Heart left ventricle (tissue), 16 donors: ENCODE measurements at regions of chr10 and their contacts with region 1.

Region 1: GRCh38 chr10:114470956-114471905 is 66.9 kb upstream of the AFAP1L2 start:
- DNase-seq: peak; percentile 59 to 77 (median 63)
- ATAC-seq: peak; percentile 52 to 81 (median 74)
- H3K4me3 ChIP-seq: no peak overlapping the region
- H3K27ac ChIP-seq: peak overlapping the region in 8 of 12 donors; percentile 9 to 60 (median 28)
- H3K4me1 ChIP-seq: peaks cover 0 to 46% (median 17%) of the 10 kb centered on the region in 12 donors
- H3K27me3 ChIP-seq: no peaks in the 10 kb centered on the region
- CTCF ChIP-seq: peak; percentile 83 to 96 (median 92)
- POLR2A ChIP-seq: no peak

Region 2: DNA sequence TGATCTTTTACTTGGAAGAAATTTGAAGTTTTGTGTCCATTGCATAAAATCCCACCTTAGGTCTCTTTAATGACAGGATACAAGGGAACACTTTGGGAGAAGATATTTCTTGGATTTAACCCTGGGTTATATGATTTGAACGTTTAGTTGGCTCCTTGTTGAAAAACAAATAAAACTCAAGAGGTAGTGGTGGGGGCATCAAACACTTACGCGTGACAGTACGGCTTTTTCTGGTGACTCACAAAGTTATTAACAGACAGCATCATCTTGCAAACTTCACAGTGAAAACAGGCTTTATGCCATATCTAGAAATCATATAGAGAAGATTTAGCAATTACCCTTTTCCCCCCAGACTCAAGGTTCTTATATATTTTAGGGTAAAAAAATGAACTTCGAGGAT is 808.1 kb before region 1 on chr10:
- intact Hi-C with region 1: no loop called
- DNase-seq: no peak
- ATAC-seq: peak in 3 of 4 donors; percentile 24 to 35 (median 34)
- H3K4me3 ChIP-seq: peak overlapping the region; percentile 25 to 68 (median 50)
- H3K27ac ChIP-seq: peak overlapping the region; percentile 66 to 98 (median 89)
- H3K4me1 ChIP-seq: peaks cover 0 to 21% (median 1%) of the 10 kb centered on the region in 12 donors
- H3K27me3 ChIP-seq: no peaks in the 10 kb centered on the region
- CTCF ChIP-seq: no peak
- POLR2A ChIP-seq: no peak

Region 3: DNA sequence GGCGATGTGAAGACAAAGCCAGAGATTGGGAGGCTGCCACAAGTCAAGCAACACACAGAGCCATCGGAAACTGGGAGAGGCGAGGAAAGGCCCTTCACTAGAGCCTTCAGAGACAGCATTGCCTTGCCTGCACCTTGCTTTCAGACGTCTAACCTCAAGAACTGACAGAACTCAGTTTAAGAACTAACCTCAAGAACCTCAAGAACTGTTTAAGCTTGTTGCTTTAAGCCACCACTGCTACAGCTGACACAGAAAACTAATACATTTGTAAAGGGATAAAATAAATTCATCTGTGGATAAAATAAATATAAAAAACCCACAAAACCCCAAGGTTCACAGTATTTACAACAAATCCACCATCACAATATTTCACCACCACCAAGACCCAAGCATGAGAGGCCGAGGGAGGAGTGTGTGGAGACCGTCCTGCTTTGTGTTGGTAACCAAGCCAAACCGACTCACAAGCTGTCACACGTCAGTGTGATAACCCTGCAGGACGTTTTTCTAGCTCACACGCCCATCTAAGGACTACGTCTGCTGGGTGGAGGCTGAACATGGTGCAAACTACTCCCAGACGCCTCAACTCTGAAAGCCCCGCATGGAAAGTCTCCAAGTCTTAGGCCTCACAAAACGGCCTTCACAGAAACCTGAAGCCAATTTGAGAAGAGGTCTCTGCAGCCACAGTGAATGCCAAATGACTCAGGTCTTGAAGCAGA is 70.0 kb after region 1 on chr10:
- intact Hi-C with region 1: loop called in 7 of 10 experiments (anchors 5 kb)
- DNase-seq: peak in 4 of 5 donors; percentile 70 to 88 (median 76)
- ATAC-seq: peak; percentile 84 to 95 (median 93)
- H3K4me3 ChIP-seq: no peak overlapping the region
- H3K27ac ChIP-seq: peak overlapping the region; percentile 25 to 86 (median 76)
- H3K4me1 ChIP-seq: peaks cover 17 to 81% (median 52%) of the 10 kb centered on the region in 12 donors
- H3K27me3 ChIP-seq: no peaks in the 10 kb centered on the region
- CTCF ChIP-seq: no peak
- POLR2A ChIP-seq: no peak

Region 4: DNA sequence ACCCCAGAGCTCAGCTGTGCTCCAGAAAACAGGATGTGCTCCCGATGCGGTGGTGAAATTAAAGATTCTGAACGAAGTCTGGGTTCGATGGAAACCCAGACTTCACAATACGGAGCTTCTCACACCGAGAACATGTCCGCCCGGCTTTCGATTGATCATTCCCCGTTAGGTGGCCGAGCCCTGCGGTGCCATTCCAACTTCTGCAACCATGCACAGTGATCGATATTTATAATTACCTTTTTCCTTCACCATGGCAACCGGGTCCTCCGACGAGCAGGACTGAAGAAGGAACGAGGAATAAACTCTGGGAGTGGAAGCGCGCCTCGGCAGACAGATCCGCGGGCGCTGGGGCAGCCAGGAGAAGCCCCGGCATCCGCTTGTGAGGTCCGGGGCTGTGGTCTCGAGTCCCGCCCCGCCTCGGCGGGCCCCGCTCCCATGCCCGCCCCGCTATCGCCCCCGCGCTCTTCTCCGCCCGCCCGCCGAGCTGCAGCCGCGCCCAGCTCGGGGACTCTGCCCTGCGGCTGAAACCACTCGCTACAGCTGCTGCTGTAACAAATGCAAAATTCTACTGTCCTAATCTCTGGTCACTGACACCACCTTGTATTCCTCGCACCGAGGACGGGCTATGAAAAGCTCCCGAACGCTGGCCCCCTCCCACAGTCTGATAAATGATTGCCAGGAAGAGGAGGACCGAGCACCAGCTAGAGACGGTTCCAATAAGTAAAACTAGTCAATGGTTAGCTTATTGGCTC is 160.6 kb after region 1 on chr10:
- intact Hi-C with region 1: loop called in 2 of 10 experiments (anchors 10 kb)
- DNase-seq: peak; percentile 52 to 71 (median 67)
- ATAC-seq: peak; percentile 17 to 68 (median 56)
- H3K4me3 ChIP-seq: peak overlapping the region; percentile 40 to 85 (median 68)
- H3K27ac ChIP-seq: peak overlapping the region; percentile 80 to 96 (median 90)
- H3K4me1 ChIP-seq: peaks cover 0 to 87% (median 50%) of the 10 kb centered on the region in 12 donors
- H3K27me3 ChIP-seq: peaks cover 0 to 21% (median 0%) of the 10 kb centered on the region in 9 donors
- CTCF ChIP-seq: no peak
- POLR2A ChIP-seq: peak in 1 of 2 donors; percentile 49

Region 5: GRCh38 chr10:114703377-114704107 is 232.3 kb after region 1 on chr10:
- intact Hi-C with region 1: loop called in 8 of 10 experiments (anchors 5 to 10 kb)
- DNase-seq: no peak
- ATAC-seq: peak in 3 of 4 donors; percentile 53 to 64 (median 61)
- H3K4me3 ChIP-seq: no peak overlapping the region
- H3K27ac ChIP-seq: peak overlapping the region in 3 of 12 donors; percentile 13 to 26 (median 13)
- H3K4me1 ChIP-seq: peaks cover 3 to 43% (median 11%) of the 10 kb centered on the region in 12 donors
- H3K27me3 ChIP-seq: no peaks in the 10 kb centered on the region
- CTCF ChIP-seq: peak; percentile 45 to 72 (median 60)
- POLR2A ChIP-seq: no peak

Region 6: DNA sequence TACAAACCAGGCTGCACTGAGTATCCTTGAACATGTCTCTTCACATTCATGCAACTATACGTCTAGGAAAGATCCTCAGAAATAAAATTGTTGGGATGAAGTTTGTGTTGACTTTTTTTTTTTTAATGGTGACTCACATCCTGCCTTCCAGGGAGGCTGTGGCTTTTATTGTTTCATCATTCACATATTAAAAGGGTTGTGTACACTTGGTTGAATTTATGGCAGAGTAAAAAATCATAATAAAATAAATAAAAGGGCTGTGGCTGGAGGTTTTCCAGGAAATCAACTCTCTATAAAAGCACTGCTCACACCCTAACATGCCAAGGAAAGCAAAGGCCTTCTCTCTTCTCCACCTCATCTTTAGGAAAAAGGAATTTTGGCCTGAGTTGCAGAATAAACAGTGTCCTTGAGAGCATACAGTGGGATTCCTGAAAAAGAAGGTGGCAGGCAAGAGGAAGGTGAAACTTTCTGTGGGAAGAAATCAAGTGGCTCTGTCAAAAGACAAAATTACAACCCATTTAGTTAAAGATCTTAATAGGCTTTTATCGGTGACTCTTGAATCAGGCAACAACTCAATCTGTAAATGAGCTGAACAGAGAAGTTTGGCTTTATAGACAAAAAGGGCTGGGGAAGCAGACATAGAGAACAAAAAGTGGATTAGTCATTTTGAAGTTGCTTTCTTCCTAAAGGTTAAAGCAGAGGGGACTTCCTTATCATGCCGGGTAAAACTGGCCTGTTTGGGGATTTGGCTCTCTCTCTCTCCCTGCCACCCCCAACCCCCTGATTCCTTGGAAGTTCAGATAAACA is 308.8 kb after region 1 on chr10:
- intact Hi-C with region 1: loop called in 9 of 10 experiments (anchors 2 to 10 kb)
- DNase-seq: no peak
- ATAC-seq: peak in 2 of 4 donors; percentile 38 to 70
- H3K4me3 ChIP-seq: no peak overlapping the region
- H3K27ac ChIP-seq: peak overlapping the region in 9 of 12 donors; percentile 7 to 50 (median 27)
- H3K4me1 ChIP-seq: peaks cover 0 to 37% (median 11%) of the 10 kb centered on the region in 12 donors
- H3K27me3 ChIP-seq: no peaks in the 10 kb centered on the region
- CTCF ChIP-seq: no peak
- POLR2A ChIP-seq: no peak

Region 7: DNA sequence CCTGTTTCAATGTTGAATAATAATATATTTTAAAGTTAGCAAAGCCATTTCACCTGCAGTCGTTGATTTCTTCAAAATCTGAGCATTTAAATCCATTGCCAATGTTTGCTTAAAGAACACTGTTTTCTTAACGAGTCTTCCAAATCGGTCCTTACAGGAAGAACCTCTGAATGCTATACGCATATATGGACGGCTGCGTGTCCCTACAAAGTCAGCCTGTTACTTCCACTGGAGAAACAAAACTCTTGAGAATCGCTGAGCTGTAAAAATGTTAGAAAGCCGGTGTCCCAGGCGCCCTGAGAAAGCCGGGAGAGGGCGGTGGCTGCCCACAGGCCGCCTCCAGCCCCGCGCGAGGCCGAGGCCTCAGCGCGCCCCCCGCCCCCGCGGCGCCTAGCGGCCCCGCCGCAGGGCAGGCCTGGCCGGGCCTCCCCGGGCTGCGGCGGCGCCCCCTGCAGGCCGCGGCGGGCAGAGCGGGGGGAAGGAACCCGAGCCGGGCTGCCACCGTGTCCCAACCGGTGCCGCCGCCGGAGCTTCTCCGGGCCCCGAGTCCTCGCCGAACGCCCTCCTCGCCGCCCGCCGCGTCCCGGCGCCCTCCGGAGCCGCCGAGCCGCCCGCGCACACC is 350.2 kb after region 1 on chr10 and contains the start of gene FHIP2A:
- intact Hi-C with region 1: loop called in 2 of 10 experiments (anchors 5 to 10 kb)
- DNase-seq: peak; percentile 78 to 91 (median 84)
- ATAC-seq: peak; percentile 51 to 95 (median 82)
- H3K4me3 ChIP-seq: peak within 1 kb of the TSS; percentile 54 to 95 (median 88)
- H3K27ac ChIP-seq: peak within 1 kb of the TSS; percentile 80 to 99 (median 97)
- H3K4me1 ChIP-seq: peaks cover 11 to 44% (median 33%) of the 10 kb centered on the region in 12 donors
- H3K27me3 ChIP-seq: no peaks in the 10 kb centered on the region
- CTCF ChIP-seq: peak in 11 of 12 donors; percentile 40 to 85 (median 63)
- POLR2A ChIP-seq: peak in 1 of 2 donors; percentile 53
- total RNA-seq, gene FHIP2A: 18.1 to 34.9 (median 28.7) TPM